H1 (cell line): ENCODE measurements at regions of chr12 and their contacts with region 1.

Region 1: DNA sequence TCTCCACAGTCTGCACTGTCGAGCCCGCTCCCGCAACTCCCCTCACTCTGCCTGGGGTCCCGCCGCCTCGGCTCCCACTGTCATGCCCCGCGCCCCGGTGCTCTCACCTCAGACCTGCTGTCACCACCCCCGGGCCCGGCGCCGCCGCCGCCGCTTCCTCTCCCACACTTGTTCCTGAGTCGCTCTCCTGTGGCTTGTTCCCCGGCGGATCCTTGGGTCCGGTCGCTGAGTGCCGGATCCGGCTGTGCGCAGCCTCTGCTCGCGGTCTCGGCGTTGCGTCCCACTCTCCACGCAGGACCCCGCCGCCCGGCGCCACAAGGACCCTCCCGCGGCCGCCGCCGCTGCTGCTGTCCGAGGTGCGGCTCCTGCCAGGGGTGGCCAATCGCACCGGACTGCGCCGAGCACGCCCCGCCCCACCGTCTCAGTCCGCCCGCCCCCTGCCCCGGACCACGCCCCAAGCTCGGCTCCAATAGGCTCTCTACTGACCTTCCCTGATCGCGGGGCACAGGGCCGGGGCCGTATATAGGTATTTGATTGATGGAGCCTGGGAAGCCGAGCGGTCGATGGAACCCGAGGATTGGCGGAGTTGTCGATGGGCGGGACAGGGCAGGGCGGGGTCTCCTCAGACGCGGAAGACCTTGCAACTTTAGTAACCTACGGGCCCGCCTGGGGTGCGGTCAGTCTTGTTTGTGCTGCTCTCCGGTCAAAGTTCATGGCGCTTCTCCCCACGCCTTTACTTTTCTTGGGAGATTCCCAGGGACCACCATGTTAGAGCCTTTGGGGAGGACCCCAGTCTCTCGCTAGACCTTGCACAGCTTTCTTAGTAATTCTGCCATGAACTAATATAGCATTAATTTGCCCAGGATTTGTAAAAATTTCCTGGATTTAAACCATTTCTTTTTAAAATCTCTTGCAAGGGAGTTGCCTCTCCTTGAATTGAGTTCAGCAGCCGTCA is at the start of gene TAOK3:
- DNase-seq: peak; percentile 93 to 94
- H3K4me3 ChIP-seq: peak within 1 kb of the TSS; percentile 85 to 97 (median 90)
- H3K27ac ChIP-seq: no peak within 1 kb of the TSS
- H3K4me1 ChIP-seq: peaks cover 5 to 9% (median 6%) of the 10 kb centered on the region in 4 experiments; a peak in 6 of 7 replicates
- H3K27me3 ChIP-seq: peaks cover 0 to 13% (median 8%) of the 10 kb centered on the region in 4 experiments; a peak in 5 of 7 replicates
- CTCF ChIP-seq: no peak
- EP300 ChIP-seq: 0 out of 3 replicates have a peak, but pooled peaks of 1 of the 2 experiments have one; percentile 3
- POLR2A ChIP-seq: peak; percentile 41 to 81
- RAD21 ChIP-seq: no peak
- total RNA-seq, gene TAOK3: 9.2 and 9.3 TPM in 2 replicates

Region 2: DNA sequence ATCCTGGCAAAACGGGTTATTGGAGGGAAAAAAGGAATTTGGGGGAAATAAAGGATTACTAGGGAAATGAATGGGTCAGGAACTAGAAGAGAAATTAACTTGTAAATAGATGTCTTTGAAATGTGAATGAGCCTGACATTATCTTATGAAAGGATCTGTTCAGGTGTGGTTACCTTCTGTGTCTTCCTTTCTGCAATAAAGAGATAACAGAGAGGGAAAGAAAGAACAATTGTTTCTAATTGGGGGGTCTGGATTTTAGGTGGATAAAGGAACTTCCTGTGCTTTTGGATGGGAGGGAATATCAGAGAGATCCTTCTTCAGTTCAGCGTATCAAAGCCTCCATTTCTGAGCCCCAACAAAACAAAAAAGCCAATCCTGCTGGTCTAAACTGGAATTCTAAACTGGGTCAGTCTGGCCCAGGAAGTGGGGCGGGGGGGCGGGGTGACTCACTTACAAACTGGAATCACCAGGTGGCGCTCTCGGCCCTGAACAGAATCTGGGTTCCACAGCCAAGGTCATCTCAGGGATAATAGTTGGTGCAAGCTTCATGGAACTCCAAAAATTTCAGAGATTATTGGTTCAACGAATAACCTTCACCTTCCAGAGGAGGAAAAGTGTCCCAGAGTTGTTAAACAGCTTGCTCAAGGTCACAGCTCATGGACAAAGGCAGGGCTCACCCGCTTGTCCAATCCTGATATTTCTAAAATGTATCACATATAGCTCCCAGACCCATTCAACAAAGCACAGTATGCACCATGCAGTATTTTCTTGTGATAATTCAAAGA is 252.0 kb before region 1 on chr12:
- CTCF ChIA-PET with region 1: interaction called, 39 read pairs
- POLR2A ChIA-PET with region 1: interaction called, 7 read pairs
- DNase-seq: peak; percentile 77 to 79
- H3K4me3 ChIP-seq: peak overlapping the region in 2 of 4 experiments; percentile 32 to 43; a peak in 3 of 8 replicates
- H3K27ac ChIP-seq: peak overlapping the region; percentile 86
- H3K4me1 ChIP-seq: peaks cover 2 to 12% (median 8%) of the 10 kb centered on the region in 4 experiments
- H3K27me3 ChIP-seq: no peaks in the 10 kb centered on the region
- CTCF ChIP-seq: peak; percentile 47 to 52 (median 47)
- EP300 ChIP-seq: no peak
- POLR2A ChIP-seq: 0 out of 3 replicates have a peak, but pooled peaks of 1 of the 2 experiments have one; percentile 14
- RAD21 ChIP-seq: peak; percentile 60 to 62

Region 3: DNA sequence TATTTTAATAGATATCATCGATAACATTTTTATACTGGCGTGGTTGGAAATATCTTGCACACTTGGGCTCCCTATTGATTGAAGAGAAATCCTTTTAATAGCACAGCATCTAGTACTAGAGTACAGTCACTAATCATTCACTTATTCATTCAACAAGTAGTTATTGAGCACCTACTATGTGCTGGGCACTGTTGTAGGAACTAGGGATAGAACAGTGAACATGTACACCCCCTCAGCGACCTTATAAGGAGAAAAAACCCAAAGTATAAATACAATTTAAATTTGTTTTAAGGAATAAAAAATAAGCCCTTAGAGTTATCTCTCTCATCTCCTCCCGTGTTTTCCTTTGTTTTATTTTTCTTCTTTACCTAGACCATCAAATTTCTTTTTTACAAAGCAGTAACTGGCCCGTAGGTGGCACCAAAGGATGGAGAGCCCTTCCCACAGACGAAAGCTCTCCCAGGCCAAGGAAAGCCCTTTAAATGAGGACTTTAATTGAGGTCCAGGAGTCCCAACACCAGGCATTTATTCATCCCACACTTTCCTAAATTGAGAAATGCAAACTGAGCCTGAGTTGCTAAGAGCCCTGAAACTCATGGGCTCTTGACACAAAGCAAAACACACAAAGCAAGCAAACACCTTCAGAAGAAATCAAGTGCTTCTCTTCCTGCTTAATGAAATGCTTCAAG is 207.9 kb before region 1 on chr12:
- CTCF ChIA-PET with region 1: interaction called, 88 read pairs
- POLR2A ChIA-PET with region 1: interaction called, 9 read pairs
- DNase-seq: no peak
- H3K4me3 ChIP-seq: no peak overlapping the region
- H3K27ac ChIP-seq: no peak overlapping the region
- H3K4me1 ChIP-seq: peaks cover 0 to 3% (median 0%) of the 10 kb centered on the region in 4 experiments; a peak in 1 of 7 replicates
- H3K27me3 ChIP-seq: no peaks in the 10 kb centered on the region
- CTCF ChIP-seq: peak; percentile 32 to 67 (median 65)
- EP300 ChIP-seq: no peak
- POLR2A ChIP-seq: no peak
- RAD21 ChIP-seq: peak; percentile 88 to 90

Region 4: GRCh38 chr12:118175823-118176447 is 196.9 kb before region 1 on chr12:
- CTCF ChIA-PET with region 1: interaction called, 120 read pairs
- POLR2A ChIA-PET with region 1: no interaction called
- DNase-seq: no peak
- H3K4me3 ChIP-seq: no peak overlapping the region
- H3K27ac ChIP-seq: no peak overlapping the region
- H3K4me1 ChIP-seq: no peaks in the 10 kb centered on the region
- H3K27me3 ChIP-seq: no peaks in the 10 kb centered on the region
- CTCF ChIP-seq: no peak
- EP300 ChIP-seq: no peak
- POLR2A ChIP-seq: no peak
- RAD21 ChIP-seq: no peak

Region 5: GRCh38 chr12:118187751-118188435 is 184.9 kb before region 1 on chr12:
- CTCF ChIA-PET with region 1: interaction called, 120 read pairs
- POLR2A ChIA-PET with region 1: interaction called, 3 read pairs
- DNase-seq: no peak
- H3K4me3 ChIP-seq: no peak overlapping the region
- H3K27ac ChIP-seq: no peak overlapping the region
- H3K4me1 ChIP-seq: peaks cover 0 to 4% (median 3%) of the 10 kb centered on the region in 4 experiments; a peak in 5 of 7 replicates
- H3K27me3 ChIP-seq: no peaks in the 10 kb centered on the region
- CTCF ChIP-seq: no peak
- EP300 ChIP-seq: no peak
- POLR2A ChIP-seq: no peak
- RAD21 ChIP-seq: no peak

Region 6: DNA sequence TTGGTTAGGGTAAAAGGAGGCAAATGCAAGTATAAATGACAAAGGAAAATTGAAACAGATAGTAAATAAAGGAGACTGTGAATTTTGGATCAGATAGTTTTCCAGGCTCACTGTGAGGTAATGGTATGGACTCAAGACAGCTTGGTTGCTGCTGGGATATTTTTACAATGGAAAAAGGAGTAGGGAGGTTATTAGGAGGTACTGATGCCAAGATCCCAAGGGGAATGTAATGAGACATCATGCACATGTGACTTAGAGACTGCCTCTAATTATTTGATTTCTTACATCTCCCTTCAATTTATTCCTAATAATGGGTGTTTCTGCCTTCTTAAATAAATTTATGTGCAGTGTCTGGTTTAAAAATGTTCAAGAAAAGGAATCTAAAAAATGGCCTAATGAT is 57.0 kb before region 1 on chr12:
- CTCF ChIA-PET with region 1: interaction called, 11 read pairs
- POLR2A ChIA-PET with region 1: no interaction called
- DNase-seq: no peak
- H3K4me3 ChIP-seq: no peak overlapping the region
- H3K27ac ChIP-seq: no peak overlapping the region
- H3K4me1 ChIP-seq: no peaks in the 10 kb centered on the region
- H3K27me3 ChIP-seq: no peaks in the 10 kb centered on the region
- CTCF ChIP-seq: no peak
- EP300 ChIP-seq: no peak
- POLR2A ChIP-seq: no peak
- RAD21 ChIP-seq: no peak

Region 7: DNA sequence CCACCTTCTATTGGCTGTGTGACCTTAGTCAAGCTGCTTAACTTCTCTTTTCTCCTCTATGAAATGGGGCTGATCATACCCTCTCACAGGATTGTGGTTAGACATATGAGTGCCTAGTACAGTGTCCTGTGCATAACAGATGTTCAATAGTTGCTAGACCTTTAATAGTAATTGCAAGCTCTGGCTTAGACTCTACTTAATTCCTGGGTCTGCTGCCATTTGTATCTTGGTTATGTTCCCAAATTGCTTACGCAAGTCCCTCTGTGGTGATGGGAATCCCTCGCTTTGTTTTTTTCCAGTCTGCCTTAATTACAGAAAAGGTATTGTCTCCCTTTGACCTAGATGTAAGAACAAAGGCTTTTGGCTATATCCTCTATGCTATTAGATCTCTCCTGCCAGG is 18.6 kb after region 1 on chr12:
- CTCF ChIA-PET with region 1: interaction called, 26 read pairs
- POLR2A ChIA-PET with region 1: interaction called, 4 read pairs
- DNase-seq: no peak
- H3K4me3 ChIP-seq: no peak overlapping the region
- H3K27ac ChIP-seq: no peak overlapping the region
- H3K4me1 ChIP-seq: no peaks in the 10 kb centered on the region
- H3K27me3 ChIP-seq: no peaks in the 10 kb centered on the region
- CTCF ChIP-seq: no peak
- EP300 ChIP-seq: no peak
- POLR2A ChIP-seq: no peak
- RAD21 ChIP-seq: no peak